HepG2 (cell line): ENCODE measurements at regions of chr2 and their contacts with region 1.

Region 1: GRCh38 chr2:200405599-200406298 is 99.3 kb downstream of the SPATS2L start:
- DNase-seq: peak; percentile 99
- ATAC-seq: peak; percentile 98
- H3K4me3 ChIP-seq: peak overlapping the region in 2 of 3 experiments; percentile 28 to 42; a peak in 2 of 6 replicates
- H3K27ac ChIP-seq: peak overlapping the region; percentile 98
- H3K4me1 ChIP-seq: peaks cover 83% of the 10 kb centered on the region
- H3K27me3 ChIP-seq: no peaks in the 10 kb centered on the region
- CTCF ChIP-seq: no peak
- EP300 ChIP-seq: peak in 1 of 2 experiments; percentile 98; a peak in 2 of 4 replicates
- POLR2A ChIP-seq: peak in 1 of 2 experiments; percentile 27; a peak in 1 of 4 replicates
- RAD21 ChIP-seq: peak; percentile 7; the same call in 1 of the 2 replicates

Region 2: GRCh38 chr2:199955339-199956261 is 450.1 kb before region 1 on chr2 and contains the starts of genes MAIP1 and TYW5:
- CTCF ChIA-PET with region 1: no interaction called
- POLR2A ChIA-PET with region 1: no interaction called
- in situ Hi-C with region 1: no loop called
- intact Hi-C with region 1: no loop called
- DNase-seq: peak; percentile 81
- ATAC-seq: peak; percentile 93
- H3K4me3 ChIP-seq: peak within 1 kb of the TSS; percentile 86 to 96 (median 94)
- H3K27ac ChIP-seq: peak within 1 kb of the TSS; percentile 91
- H3K4me1 ChIP-seq: peaks cover 50% of the 10 kb centered on the region
- H3K27me3 ChIP-seq: no peaks in the 10 kb centered on the region; a peak in 1 of 5 replicates
- CTCF ChIP-seq: peak; percentile 66
- EP300 ChIP-seq: 0 out of 4 replicates have a peak, but pooled peaks of 1 of the 2 experiments have one; percentile 11
- POLR2A ChIP-seq: peak; percentile 95 to 96
- RAD21 ChIP-seq: peak; percentile 54
- total RNA-seq, gene MAIP1: 72.9 and 90.9 TPM in 2 replicates
- total RNA-seq, gene TYW5: 14.6 and 14.8 TPM in 2 replicates

Region 3: DNA sequence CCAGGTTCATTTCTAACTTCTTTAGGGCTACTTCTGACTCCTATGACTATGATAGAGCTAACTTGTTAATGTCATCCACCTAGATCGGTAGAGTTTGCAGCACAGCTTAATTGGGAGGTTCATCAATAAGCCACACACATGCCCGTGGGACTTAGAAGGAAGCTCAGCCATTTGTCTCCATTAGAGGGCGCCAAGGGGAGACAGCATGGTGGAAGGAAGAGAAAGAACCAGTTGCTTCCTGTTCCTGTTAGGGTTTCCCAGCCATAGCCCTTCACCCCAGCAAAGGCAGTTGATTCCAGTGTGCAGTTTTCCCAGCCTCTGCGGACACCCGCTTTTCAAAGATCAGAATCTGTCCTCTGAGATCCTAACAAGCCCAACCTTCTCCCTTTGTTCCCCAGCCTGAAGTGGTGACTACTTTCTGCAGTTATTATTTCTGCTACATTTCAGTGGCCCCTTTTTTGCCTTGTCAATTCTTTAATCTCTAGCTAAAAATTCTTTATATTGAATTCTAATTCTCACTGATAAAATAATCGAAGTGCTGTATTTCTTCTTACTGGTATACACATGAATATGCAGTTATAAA is 420.0 kb before region 1 on chr2:
- CTCF ChIA-PET with region 1: no interaction called
- POLR2A ChIA-PET with region 1: no interaction called
- in situ Hi-C with region 1: no loop called
- intact Hi-C with region 1: loop called (anchors 10 kb)
- DNase-seq: peak; percentile 83
- ATAC-seq: peak; percentile 97
- H3K4me3 ChIP-seq: peak overlapping the region in 2 of 3 experiments; percentile 16 to 42; a peak in 2 of 6 replicates
- H3K27ac ChIP-seq: no peak overlapping the region
- H3K4me1 ChIP-seq: peaks cover 9% of the 10 kb centered on the region
- H3K27me3 ChIP-seq: no peaks in the 10 kb centered on the region
- CTCF ChIP-seq: peak; percentile 86
- EP300 ChIP-seq: no peak
- POLR2A ChIP-seq: no peak
- RAD21 ChIP-seq: peak; percentile 54; the same call in 1 of the 2 replicates

Region 4: GRCh38 chr2:200054681-200055468 is 350.9 kb before region 1 on chr2:
- CTCF ChIA-PET with region 1: no interaction called
- POLR2A ChIA-PET with region 1: no interaction called
- in situ Hi-C with region 1: no loop called
- intact Hi-C with region 1: loop called (anchors 10 kb)
- DNase-seq: peak; percentile 47
- ATAC-seq: peak; percentile 93
- H3K4me3 ChIP-seq: peak overlapping the region in 2 of 3 experiments; percentile 11 to 45; a peak in 1 of 6 replicates
- H3K27ac ChIP-seq: no peak overlapping the region
- H3K4me1 ChIP-seq: peaks cover 12% of the 10 kb centered on the region
- H3K27me3 ChIP-seq: no peaks in the 10 kb centered on the region
- CTCF ChIP-seq: peak; percentile 93
- EP300 ChIP-seq: no peak
- POLR2A ChIP-seq: no peak
- RAD21 ChIP-seq: peak; percentile 80

Region 5: GRCh38 chr2:200219309-200220113 is 186.2 kb before region 1 on chr2:
- CTCF ChIA-PET with region 1: no interaction called
- POLR2A ChIA-PET with region 1: no interaction called
- in situ Hi-C with region 1: loop called (anchors 10 kb)
- intact Hi-C with region 1: loop called (anchors 1 kb)
- DNase-seq: peak; percentile 72
- ATAC-seq: no peak
- H3K4me3 ChIP-seq: no peak overlapping the region
- H3K27ac ChIP-seq: peak overlapping the region; percentile 75
- H3K4me1 ChIP-seq: peaks cover 71% of the 10 kb centered on the region
- H3K27me3 ChIP-seq: no peaks in the 10 kb centered on the region
- CTCF ChIP-seq: no peak
- EP300 ChIP-seq: peak in 1 of 2 experiments; percentile 64; a peak in 2 of 4 replicates
- POLR2A ChIP-seq: no peak
- RAD21 ChIP-seq: no peak

Region 6: DNA sequence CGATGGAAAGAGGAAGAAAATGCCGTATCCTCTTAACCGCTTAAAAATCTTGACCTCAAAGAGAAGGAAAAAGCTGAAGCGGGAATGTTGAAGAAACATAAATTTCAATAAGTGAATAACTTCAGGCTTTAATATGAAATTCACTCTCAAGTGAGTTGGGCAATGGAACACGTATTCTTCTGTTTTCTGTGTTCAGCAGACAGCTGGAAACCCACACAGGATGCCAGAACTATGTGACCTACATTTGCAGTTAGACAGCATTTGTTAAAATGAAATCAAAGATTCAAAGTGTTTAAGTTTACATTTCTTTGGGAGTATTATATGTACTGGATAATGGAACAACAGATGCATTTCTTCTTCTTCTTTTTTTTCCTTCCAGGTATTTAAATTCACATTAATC is 179.8 kb before region 1 on chr2:
- CTCF ChIA-PET with region 1: no interaction called
- POLR2A ChIA-PET with region 1: no interaction called
- in situ Hi-C with region 1: loop called (anchors 10 kb)
- intact Hi-C with region 1: loop called (anchors 1 kb)
- DNase-seq: no peak
- ATAC-seq: no peak
- H3K4me3 ChIP-seq: no peak overlapping the region
- H3K27ac ChIP-seq: no peak overlapping the region
- H3K4me1 ChIP-seq: peaks cover 41% of the 10 kb centered on the region
- H3K27me3 ChIP-seq: no peaks in the 10 kb centered on the region
- CTCF ChIP-seq: no peak
- EP300 ChIP-seq: no peak
- POLR2A ChIP-seq: no peak
- RAD21 ChIP-seq: no peak

Region 7: GRCh38 chr2:200319548-200320337 is 86.0 kb before region 1 on chr2:
- CTCF ChIA-PET with region 1: no interaction called
- POLR2A ChIA-PET with region 1: interaction called, 11 read pairs
- in situ Hi-C with region 1: no loop called
- intact Hi-C with region 1: loop called (anchors 1 kb)
- DNase-seq: peak; percentile 92
- ATAC-seq: peak; percentile 67
- H3K4me3 ChIP-seq: peak overlapping the region in 2 of 3 experiments; percentile 4 to 12; a peak in 2 of 6 replicates
- H3K27ac ChIP-seq: peak overlapping the region; percentile 90
- H3K4me1 ChIP-seq: peaks cover 98% of the 10 kb centered on the region
- H3K27me3 ChIP-seq: no peaks in the 10 kb centered on the region
- CTCF ChIP-seq: no peak
- EP300 ChIP-seq: peak in 1 of 2 experiments; percentile 92; a peak in 2 of 4 replicates
- POLR2A ChIP-seq: no peak
- RAD21 ChIP-seq: no peak

Region 8: DNA sequence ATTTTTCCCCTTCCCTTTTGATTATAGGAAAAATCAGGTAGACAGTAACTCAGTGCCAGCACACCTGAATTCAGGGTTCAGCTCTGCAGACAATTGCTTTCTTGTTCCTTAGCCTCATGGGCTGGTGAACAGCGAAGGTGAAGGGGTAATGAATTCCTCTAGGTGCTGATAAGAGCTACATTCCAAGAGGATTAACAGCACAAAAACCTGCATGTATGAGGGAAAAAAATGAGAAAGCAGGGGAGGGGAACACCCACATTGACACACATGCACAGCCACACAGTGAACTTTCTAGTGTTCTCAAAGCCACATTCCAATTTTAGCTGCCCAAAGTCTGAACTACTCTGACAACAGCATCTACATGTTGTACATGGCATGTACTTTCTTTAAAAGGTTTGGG is 53.1 kb before region 1 on chr2:
- CTCF ChIA-PET with region 1: no interaction called
- POLR2A ChIA-PET with region 1: no interaction called
- in situ Hi-C with region 1: no loop called
- intact Hi-C with region 1: no loop called
- DNase-seq: peak; percentile 60
- ATAC-seq: peak; percentile 29
- H3K4me3 ChIP-seq: no peak overlapping the region
- H3K27ac ChIP-seq: peak overlapping the region; percentile 23
- H3K4me1 ChIP-seq: peaks cover 53% of the 10 kb centered on the region
- H3K27me3 ChIP-seq: no peaks in the 10 kb centered on the region
- CTCF ChIP-seq: no peak
- EP300 ChIP-seq: no peak
- POLR2A ChIP-seq: no peak
- RAD21 ChIP-seq: no peak

Region 9: DNA sequence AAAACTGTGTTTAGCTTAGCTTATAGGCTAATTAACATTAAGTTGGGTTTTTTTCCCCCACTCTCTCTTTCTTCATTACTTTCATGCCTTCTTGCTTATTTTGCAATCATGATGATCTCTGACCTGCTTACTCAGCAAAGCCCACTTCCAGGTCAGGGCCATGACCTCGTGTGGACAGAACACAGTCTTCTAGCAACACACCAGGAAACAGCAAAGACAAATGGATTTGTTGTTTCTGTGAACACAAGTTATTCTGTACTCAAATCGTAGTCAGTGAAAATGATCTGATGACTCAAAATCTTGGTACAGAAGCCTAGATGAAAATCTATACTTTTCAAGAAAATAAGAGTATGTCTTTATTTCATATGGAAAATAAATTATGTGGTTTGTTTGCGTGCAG is 38.5 kb before region 1 on chr2:
- CTCF ChIA-PET with region 1: no interaction called
- POLR2A ChIA-PET with region 1: no interaction called
- in situ Hi-C with region 1: no loop called
- intact Hi-C with region 1: loop called (anchors 2 kb)
- DNase-seq: peak; percentile 91
- ATAC-seq: peak; percentile 56
- H3K4me3 ChIP-seq: no peak overlapping the region
- H3K27ac ChIP-seq: peak overlapping the region; percentile 47
- H3K4me1 ChIP-seq: peaks cover 73% of the 10 kb centered on the region
- H3K27me3 ChIP-seq: no peaks in the 10 kb centered on the region
- CTCF ChIP-seq: no peak
- EP300 ChIP-seq: peak in 1 of 2 experiments; percentile 99; a peak in 2 of 4 replicates
- POLR2A ChIP-seq: no peak
- RAD21 ChIP-seq: no peak

Region 10: GRCh38 chr2:200677721-200678585 is 272.2 kb after region 1 on chr2:
- CTCF ChIA-PET with region 1: no interaction called
- POLR2A ChIA-PET with region 1: no interaction called
- in situ Hi-C with region 1: no loop called
- intact Hi-C with region 1: no loop called
- DNase-seq: peak; percentile 50
- ATAC-seq: peak; percentile 79
- H3K4me3 ChIP-seq: no peak overlapping the region
- H3K27ac ChIP-seq: peak overlapping the region; percentile 16
- H3K4me1 ChIP-seq: peaks cover 26% of the 10 kb centered on the region
- H3K27me3 ChIP-seq: no peaks in the 10 kb centered on the region
- CTCF ChIP-seq: no peak
- EP300 ChIP-seq: peak in 1 of 2 experiments; percentile 35; a peak in 1 of 4 replicates
- POLR2A ChIP-seq: no peak
- RAD21 ChIP-seq: 0 out of 2 replicates have a peak, but pooled peaks have one; percentile 12